ENCODE measurements at regions of chr3 and their contacts with region 1.

Region 1: DNA sequence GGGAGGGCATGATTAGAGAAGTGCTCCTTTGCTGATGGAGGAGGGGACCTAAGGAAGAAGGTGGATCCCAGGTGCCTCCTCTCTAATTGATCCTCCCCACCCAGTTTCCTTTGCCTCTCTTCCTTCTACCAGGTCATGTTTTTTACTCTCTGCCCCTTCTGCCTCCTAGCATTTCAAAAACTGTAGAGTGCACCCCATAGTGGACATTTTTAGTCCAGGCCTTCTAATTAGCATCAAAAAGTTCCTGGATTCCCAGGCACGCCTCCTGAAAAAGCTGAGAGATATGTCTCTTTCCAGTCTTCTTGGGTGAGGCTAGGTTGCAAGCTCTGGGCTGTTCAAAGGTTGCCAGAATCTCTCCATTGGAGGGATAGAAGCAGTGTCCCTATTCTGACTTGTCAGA is 18.7 kb upstream of the ITGB5 start:
- DNase-seq: no peak
- H3K4me3 Mint-ChIP-seq: no peak overlapping the region
- H3K27ac Mint-ChIP-seq: no peak overlapping the region
- H3K4me1 Mint-ChIP-seq: no peaks in the 10 kb centered on the region
- H3K27me3 Mint-ChIP-seq: peaks cover 11% of the 10 kb centered on the region

Region 2: DNA sequence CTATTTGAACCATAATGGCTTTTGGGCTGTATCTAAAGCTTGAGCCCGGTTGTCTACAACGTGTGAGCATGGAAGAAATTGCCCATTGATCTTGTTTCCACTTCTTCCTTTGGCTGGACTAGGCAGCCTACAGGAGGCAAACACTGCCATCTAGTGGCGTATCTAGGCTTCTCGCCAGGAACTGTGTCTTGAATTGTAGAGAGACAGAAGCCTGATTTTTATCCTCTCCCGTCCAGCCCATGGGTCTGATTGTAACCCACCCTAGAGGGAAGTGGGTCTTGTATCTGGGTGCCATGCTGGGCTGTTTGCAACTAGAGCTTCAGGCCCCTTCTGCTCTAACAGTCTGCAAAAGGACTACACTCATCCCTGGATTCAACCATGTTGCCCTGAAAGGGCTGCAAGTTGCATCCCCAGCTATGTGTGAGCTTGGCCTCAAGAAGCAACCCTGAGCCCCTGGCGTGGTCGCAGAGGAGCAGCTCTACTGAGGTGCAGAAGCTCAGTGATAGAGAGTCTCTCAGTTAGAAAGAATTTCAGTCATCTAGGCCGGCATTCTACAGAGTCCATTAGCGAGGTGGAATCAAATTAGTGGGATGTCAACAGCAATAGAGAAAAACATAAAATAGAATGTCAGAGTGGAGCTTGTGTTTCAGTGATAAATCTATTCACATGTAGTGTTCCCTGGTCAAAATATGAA is 345.8 kb before region 1 on chr3:
- CTCF ChIA-PET with region 1: interaction called, 5 read pairs
- POLR2A ChIA-PET with region 1: no interaction called
- intact Hi-C with region 1: loop called (anchors 10 kb)
- DNase-seq: peak; percentile 74
- H3K4me3 Mint-ChIP-seq: no peak overlapping the region
- H3K27ac Mint-ChIP-seq: no peak overlapping the region
- H3K4me1 Mint-ChIP-seq: no peaks in the 10 kb centered on the region
- H3K27me3 Mint-ChIP-seq: peaks cover 35% of the 10 kb centered on the region

Region 3: GRCh38 chr3:124768812-124769211 is 137.0 kb before region 1 on chr3:
- CTCF ChIA-PET with region 1: interaction called, 285 read pairs
- POLR2A ChIA-PET with region 1: no interaction called
- intact Hi-C with region 1: no loop called
- DNase-seq: peak; percentile 31
- H3K4me3 Mint-ChIP-seq: no peak overlapping the region
- H3K27ac Mint-ChIP-seq: no peak overlapping the region
- H3K4me1 Mint-ChIP-seq: no peaks in the 10 kb centered on the region
- H3K27me3 Mint-ChIP-seq: peaks cover 4% of the 10 kb centered on the region

Region 4: DNA sequence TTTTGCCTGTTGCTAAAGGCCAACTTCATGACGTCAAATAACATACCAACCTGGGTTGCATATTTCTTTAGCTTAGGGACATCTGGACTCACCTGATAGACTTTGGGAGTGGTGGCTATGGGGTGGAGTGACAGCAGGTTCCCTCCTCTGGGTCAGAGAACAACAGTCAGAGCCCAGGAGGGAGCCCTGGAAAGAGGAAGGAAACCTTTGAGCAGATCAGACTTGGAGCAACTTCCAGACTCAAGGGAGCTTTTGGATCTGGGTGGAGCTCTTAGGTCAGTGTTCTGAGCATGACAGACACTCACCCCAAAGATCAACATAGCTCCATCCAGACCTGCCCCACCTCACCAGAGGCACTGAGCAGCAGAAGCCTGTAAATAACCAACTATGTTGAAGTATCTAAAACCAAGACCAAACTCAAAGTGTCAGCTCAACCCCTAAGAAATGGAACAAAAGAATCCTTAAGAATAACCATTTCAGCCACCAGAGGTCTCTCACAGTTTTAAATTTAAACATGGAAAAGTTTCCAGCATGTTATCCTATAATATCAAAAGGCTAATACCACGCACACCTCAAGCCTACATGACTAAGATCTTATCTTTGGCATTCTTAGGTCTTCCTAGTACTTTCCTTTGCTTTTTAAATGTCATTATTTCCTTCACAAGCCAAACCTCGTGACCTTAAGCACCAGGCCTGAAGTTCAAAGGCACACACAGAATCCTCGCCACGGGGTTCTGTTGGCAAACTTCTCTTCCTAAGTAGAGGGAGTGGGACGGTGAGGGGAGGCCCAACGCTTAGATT is 119.2 kb before region 1 on chr3:
- CTCF ChIA-PET with region 1: interaction called, 29 read pairs
- POLR2A ChIA-PET with region 1: interaction called, 3 read pairs
- intact Hi-C with region 1: no loop called
- DNase-seq: no peak
- H3K4me3 Mint-ChIP-seq: no peak overlapping the region
- H3K27ac Mint-ChIP-seq: no peak overlapping the region
- H3K4me1 Mint-ChIP-seq: peaks cover 2% of the 10 kb centered on the region
- H3K27me3 Mint-ChIP-seq: no peaks in the 10 kb centered on the region

Region 5: DNA sequence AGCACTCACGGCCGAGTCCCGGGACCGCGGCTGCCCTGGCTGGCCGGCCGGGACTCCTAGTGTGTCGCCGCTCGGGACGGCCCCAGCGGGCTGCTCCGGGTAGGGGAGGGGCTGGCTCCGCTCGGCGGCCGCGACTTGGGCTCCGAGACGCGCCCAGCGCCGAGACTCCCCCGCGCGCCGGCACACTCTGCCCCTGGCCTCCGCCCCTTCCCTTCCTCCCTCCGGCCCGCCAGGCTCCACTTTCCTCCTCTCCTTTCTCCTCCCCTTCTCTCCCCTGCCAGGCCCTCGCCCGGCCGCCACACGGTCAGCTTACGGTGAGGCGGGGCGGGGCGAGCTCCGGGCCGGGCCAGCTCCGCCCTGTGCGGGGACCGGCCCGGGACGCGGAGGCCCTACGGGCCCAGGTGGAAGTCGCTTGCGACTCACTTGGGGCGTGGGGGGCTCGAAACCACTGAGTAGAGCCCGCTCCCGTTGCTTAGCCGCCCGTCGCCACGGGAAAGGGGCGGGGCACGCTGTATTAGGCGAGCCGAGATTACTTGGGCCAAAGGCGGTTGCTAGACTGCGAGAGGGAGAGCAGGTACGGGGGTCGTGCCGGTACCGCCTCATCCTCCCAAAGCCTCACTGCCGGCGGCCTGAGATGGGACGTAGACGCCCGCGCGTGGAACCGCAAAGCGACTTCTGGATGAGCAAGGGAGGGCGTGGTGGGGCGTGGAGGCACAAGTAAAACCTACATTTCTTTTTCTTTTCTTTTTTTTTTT is 18.5 kb before region 1 on chr3 and contains the start of gene ITGB5:
- CTCF ChIA-PET with region 1: interaction called, 20 read pairs
- POLR2A ChIA-PET with region 1: no interaction called
- intact Hi-C with region 1: no loop called
- DNase-seq: peak; percentile 45
- H3K4me3 Mint-ChIP-seq: peak within 1 kb of the TSS; percentile 64
- H3K27ac Mint-ChIP-seq: no peak within 1 kb of the TSS
- H3K4me1 Mint-ChIP-seq: peaks cover 2% of the 10 kb centered on the region
- H3K27me3 Mint-ChIP-seq: peaks cover 45% of the 10 kb centered on the region
- total RNA-seq, gene ITGB5: 0.52 to 1.5 TPM

Region 6: GRCh38 chr3:124916837-124917409 is 11.1 kb after region 1 on chr3:
- CTCF ChIA-PET with region 1: interaction called, 25 read pairs
- POLR2A ChIA-PET with region 1: no interaction called
- intact Hi-C with region 1: no loop called
- DNase-seq: no peak
- H3K4me3 Mint-ChIP-seq: no peak overlapping the region
- H3K27ac Mint-ChIP-seq: no peak overlapping the region
- H3K4me1 Mint-ChIP-seq: no peaks in the 10 kb centered on the region
- H3K27me3 Mint-ChIP-seq: peaks cover 3% of the 10 kb centered on the region

Measured in activated CD4-positive, alpha-beta memory T cell treated with anti-CD3 and anti-CD28 coated beads for 36 hours (primary cell).